HepG2 (cell line): ENCODE measurements at regions of chr6 and their contacts with region 1.

Region 1: DNA sequence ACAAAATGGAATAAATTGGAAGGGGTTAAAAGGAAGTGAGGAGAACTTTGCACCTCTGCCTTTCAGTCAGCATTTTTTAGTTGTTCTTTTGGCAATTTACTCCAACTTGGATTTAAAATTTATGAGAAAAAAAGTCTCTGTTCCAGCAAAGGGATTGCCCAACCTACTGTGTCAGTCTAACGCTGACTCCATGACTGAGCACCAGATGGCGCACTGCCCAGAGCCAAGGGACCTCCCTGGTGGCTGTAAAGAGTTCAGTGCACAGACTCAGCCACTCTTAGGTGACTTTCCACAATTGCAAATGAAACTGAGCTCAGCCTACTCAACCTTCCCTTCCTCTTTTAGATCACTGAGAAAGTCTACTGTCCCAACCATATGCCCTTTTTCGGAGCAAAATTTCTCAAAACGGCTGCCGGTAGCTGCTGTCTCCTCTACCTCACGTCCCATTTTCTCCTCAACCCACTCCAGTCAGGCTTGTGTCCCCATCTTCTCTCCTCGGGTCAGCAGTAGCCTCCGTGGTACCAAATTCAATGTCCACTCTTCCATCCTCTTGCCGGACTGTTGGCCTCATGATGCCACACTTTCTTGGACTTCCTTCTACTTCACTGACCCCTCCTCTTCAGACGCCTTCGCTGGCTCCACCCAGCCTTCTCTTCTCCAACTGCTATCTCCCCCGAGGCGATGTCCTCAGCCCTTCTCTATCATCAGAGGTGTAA is 38.7 kb downstream of the GSTA2 start:
- DNase-seq: peak; percentile 79
- ATAC-seq: peak; percentile 89
- H3K4me3 ChIP-seq: 0 out of 6 replicates have a peak overlapping the region, but pooled peaks of 1 of the 3 experiments have one; percentile 49
- H3K27ac ChIP-seq: peak overlapping the region; percentile 94
- H3K4me1 ChIP-seq: peaks cover 62% of the 10 kb centered on the region
- H3K27me3 ChIP-seq: no peaks in the 10 kb centered on the region
- CTCF ChIP-seq: peak; percentile 95
- EP300 ChIP-seq: no peak
- POLR2A ChIP-seq: no peak
- RAD21 ChIP-seq: peak; percentile 97

Region 2: GRCh38 chr6:52735071-52735470 is 10.5 kb after region 1 on chr6:
- CTCF ChIA-PET with region 1: no interaction called
- POLR2A ChIA-PET with region 1: interaction called, 15 read pairs
- in situ Hi-C with region 1: no loop called
- intact Hi-C with region 1: loop called (anchors 1 kb)
- DNase-seq: peak; percentile 43
- ATAC-seq: peak; percentile 88
- H3K4me3 ChIP-seq: no peak overlapping the region
- H3K27ac ChIP-seq: no peak overlapping the region
- H3K4me1 ChIP-seq: peaks cover 19% of the 10 kb centered on the region
- H3K27me3 ChIP-seq: no peaks in the 10 kb centered on the region
- CTCF ChIP-seq: no peak
- EP300 ChIP-seq: no peak
- POLR2A ChIP-seq: no peak
- RAD21 ChIP-seq: 0 out of 2 replicates have a peak, but pooled peaks have one; percentile 14

Region 3: DNA sequence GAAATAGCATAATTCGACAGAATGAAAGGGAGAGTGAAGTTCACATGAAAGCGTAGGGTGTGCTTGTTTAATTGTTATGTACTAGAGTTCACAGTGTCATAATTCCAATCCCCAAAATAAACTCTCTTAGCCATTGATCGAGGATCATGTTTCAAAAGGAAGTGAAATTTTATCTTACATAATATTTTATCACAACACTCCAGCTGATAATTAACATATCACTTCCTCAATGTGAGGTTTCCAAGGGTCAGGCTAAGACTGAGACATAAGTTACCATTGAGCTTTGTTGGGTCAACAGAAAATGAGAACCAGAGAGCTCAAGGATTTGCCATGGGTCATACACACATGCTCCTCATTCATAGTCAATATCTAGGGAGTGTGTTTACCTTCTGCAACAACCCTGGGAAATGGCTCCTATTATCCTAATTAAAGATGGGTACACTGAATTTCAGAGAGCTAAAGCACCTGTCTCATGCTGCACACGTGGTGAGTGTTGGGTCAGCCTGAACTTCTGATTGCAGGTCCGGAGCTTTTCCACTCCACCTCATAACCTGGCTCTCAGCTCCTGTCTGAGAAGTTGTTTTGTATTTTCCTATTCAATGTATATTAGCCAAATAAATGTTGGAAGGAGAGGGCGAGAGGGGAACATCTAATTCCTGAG is 35.7 kb after region 1 on chr6:
- CTCF ChIA-PET with region 1: no interaction called
- POLR2A ChIA-PET with region 1: interaction called, 3 read pairs
- in situ Hi-C with region 1: no loop called
- intact Hi-C with region 1: loop called (anchors 5 kb)
- DNase-seq: no peak
- ATAC-seq: no peak
- H3K4me3 ChIP-seq: no peak overlapping the region
- H3K27ac ChIP-seq: no peak overlapping the region
- H3K4me1 ChIP-seq: peaks cover 46% of the 10 kb centered on the region
- H3K27me3 ChIP-seq: no peaks in the 10 kb centered on the region
- CTCF ChIP-seq: no peak
- EP300 ChIP-seq: no peak
- POLR2A ChIP-seq: no peak
- RAD21 ChIP-seq: no peak

Region 4: GRCh38 chr6:52839119-52840055 is 114.8 kb after region 1 on chr6:
- CTCF ChIA-PET with region 1: interaction called, 16 read pairs
- POLR2A ChIA-PET with region 1: no interaction called
- in situ Hi-C with region 1: no loop called
- intact Hi-C with region 1: loop called (anchors 1 kb)
- DNase-seq: peak; percentile 79
- ATAC-seq: peak; percentile 98
- H3K4me3 ChIP-seq: peak overlapping the region; percentile 30 to 71 (median 56); a peak in 5 of 6 replicates
- H3K27ac ChIP-seq: no peak overlapping the region
- H3K4me1 ChIP-seq: peaks cover 6% of the 10 kb centered on the region; the same call in 1 of the 2 replicates
- H3K27me3 ChIP-seq: 0 out of 5 replicates have a peak, but pooled peaks cover 0 to 1% of the 10 kb centered on the region in 2 experiments
- CTCF ChIP-seq: peak; percentile 94
- EP300 ChIP-seq: no peak
- POLR2A ChIP-seq: no peak
- RAD21 ChIP-seq: peak; percentile 73